ENCODE measurements at regions of chr14 and their contacts with region 1.

Region 1: DNA sequence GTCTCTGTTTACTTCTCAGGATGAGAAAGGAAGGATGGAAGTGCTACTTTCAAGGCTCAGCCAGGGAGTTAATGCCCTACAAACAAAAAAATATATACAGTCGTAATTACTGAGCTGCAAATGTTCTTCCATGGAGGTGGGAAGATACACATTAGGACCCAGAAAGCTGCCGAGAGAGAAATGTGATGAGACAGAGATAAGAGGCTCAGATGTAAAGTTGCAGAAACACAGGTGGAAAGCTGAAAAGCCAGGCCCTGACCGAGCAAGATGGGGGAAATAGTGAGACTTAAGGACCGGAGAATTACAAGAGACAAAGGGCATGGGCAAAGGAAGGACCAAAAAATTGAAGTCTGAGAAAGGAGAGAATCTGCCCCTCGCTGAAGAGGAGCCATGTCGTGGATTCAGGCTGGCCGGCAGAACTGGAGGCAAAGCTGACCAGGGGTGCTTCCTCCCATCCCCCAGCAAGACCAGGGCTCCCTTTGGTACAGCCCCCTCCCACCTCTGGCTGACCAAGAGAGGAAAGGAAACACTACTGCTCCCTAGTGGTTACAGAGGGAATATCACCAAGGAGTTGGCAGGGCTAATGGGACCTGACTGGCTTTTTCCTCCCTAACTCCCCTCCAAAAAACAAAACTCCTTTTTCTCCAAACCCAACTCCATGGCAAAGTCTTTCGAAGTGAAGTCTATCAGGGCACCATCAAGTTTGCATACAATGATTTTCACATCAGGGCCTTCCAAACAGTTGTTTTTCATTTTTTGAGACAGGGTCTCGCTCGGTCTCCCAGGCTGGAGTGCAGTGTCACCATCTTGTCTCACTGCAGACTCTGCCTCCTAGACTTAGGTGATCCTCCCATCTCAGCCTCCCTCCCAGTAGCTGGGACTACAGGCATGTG is 12.1 kb downstream of the ZFHX2 start:
- DNase-seq: peak; percentile 9
- H3K4me3 ChIP-seq: no peak overlapping the region
- H3K27ac ChIP-seq: no peak overlapping the region
- H3K4me1 ChIP-seq: no peaks in the 10 kb centered on the region
- H3K27me3 ChIP-seq: no peaks in the 10 kb centered on the region
- CTCF ChIP-seq: peak; percentile 78

Region 2: GRCh38 chr14:23478111-23478759 is 61.3 kb before region 1 on chr14:
- CTCF ChIA-PET with region 1: no interaction called
- dilution Hi-C with region 1: no loop called
- in situ Hi-C with region 1: no loop called
- intact Hi-C with region 1: loop called (anchors 1 kb)
- DNase-seq: peak; percentile 41
- H3K4me3 ChIP-seq: no peak overlapping the region
- H3K27ac ChIP-seq: no peak overlapping the region
- H3K4me1 ChIP-seq: no peaks in the 10 kb centered on the region
- H3K27me3 ChIP-seq: no peaks in the 10 kb centered on the region
- CTCF ChIP-seq: peak; percentile 68 to 69

Region 3: DNA sequence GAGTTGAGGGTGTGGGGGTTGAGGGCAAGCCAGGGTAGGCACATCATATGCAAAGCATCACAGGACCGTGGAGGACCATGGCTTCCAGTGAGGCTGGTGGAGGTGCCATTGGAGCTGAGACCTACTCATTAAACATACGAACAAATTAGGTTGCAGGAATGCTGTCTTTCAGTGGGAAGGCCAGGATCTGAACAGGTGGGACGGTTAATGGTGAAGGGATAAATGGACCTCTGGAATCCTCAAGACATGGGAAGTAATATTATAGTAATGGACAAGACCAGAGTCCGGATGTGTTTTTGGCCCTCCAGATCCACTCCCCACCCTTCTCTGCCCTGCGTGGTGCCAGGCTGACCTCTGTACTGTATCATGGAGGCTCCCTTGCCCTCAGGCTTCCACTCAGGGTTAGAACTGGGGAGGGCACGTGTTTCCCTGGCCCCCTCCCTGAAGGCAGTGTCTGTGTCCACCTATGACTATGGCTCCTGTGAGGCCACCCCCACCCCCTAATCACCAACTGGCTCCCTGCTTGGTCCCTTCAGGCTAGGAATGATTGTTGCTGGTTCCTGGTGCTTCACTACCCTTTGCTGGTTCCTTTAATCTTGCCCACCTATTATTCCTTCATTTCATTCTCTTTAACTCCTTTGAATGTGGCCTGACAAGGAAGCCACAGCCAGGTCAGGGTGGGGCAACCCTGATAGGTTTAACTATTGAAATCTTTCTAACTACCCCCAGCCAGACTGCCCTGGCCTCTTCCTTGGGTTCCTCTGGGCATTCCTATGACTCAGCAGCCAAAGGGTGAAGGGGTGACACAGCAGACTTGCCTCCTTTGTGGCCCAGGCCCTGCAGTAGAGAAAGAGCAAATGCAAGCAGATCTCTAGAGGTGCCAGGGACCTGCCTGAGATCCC is 107.4 kb after region 1 on chr14:
- CTCF ChIA-PET with region 1: no interaction called
- dilution Hi-C with region 1: no loop called
- in situ Hi-C with region 1: no loop called
- intact Hi-C with region 1: no loop called
- DNase-seq: peak; percentile 54
- H3K4me3 ChIP-seq: no peak overlapping the region
- H3K27ac ChIP-seq: no peak overlapping the region
- H3K4me1 ChIP-seq: no peaks in the 10 kb centered on the region
- H3K27me3 ChIP-seq: no peaks in the 10 kb centered on the region
- CTCF ChIP-seq: no peak

Measured in mammary epithelial cell (primary cell).